GM10248 (cell line): ENCODE measurements at regions of chr6 and their contacts with region 1.

Region 1: GRCh38 chr6:14200047-14200446 is 82.5 kb downstream of the CD83 start:
- DNase-seq: no peak
- CTCF ChIP-seq: no peak

Region 2: GRCh38 chr6:14210663-14211561 is 10.9 kb after region 1 on chr6:
- CTCF ChIA-PET with region 1: interaction called, 21 read pairs
- POLR2A ChIA-PET with region 1: no interaction called
- DNase-seq: peak; percentile 97
- CTCF ChIP-seq: peak; percentile 90